ENCODE measurements at regions of chr9 and their contacts with region 1.

Region 1: DNA sequence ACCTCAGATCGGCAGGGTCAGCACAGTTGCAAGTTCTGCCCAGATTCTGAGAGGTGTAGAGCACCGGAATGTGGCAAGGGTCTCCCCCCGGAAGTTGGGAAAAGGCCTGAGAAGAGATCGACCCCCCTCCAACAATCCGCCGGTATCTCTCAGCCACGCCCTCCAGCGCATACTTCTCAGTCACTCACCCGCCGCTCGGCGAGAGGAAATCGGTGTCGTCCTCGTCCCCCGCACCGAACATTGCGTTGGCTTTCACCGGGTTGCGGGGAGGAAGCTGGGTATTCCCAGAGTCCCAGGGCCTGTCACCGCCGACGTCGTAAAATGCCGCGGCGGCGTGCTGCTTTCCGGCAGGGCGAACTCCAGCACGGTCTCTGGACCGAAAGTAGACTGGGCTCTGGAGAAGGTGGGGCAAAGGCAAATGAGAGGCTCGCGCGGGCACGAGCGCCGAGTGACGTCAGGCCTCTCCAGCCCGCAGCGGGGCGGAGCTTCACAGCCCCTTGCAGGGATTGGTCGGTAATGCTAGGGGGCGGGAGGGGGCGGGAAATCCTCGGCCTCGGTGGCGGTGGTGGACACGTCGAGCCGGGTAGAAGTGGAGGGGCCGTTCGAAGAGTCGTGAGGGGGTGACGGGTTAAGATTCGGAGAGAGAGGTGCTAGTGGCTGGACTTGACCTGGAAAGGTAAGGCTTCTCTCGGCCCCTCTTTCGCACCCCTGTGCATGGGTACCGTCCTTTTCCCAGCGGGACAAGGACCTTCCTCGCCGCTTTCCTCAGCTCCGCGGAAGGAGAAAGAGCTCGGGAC is at the starts of genes FKBP15 and SLC31A1:
- DNase-seq: peak; percentile 98
- H3K4me3 Mint-ChIP-seq: peak within 1 kb of the TSS; percentile 95
- H3K27ac Mint-ChIP-seq: peak within 1 kb of the TSS; percentile 91
- H3K4me1 Mint-ChIP-seq: peaks cover 38% of the 10 kb centered on the region
- H3K27me3 Mint-ChIP-seq: no peaks in the 10 kb centered on the region
- total RNA-seq, gene FKBP15: 14.7 to 15.8 TPM
- total RNA-seq, gene SLC31A1: 8.1 to 8.2 TPM

Region 2: GRCh38 chr9:111661150-111661801 is 1559.9 kb before region 1 on chr9 and contains the start of gene GNG10:
- CTCF ChIA-PET with region 1: no interaction called
- intact Hi-C with region 1: loop called (anchors 5 kb)
- DNase-seq: peak; percentile 63
- H3K4me3 Mint-ChIP-seq: peak within 1 kb of the TSS; percentile 97
- H3K27ac Mint-ChIP-seq: peak within 1 kb of the TSS; percentile 95
- H3K4me1 Mint-ChIP-seq: peaks cover 31% of the 10 kb centered on the region
- H3K27me3 Mint-ChIP-seq: peaks cover 2% of the 10 kb centered on the region
- total RNA-seq, gene GNG10: 20.6 to 21.1 TPM

Region 3: GRCh38 chr9:112750111-112750767 is 471.0 kb before region 1 on chr9 and contains the start of gene SNX30:
- CTCF ChIA-PET with region 1: no interaction called
- intact Hi-C with region 1: loop called (anchors 5 kb)
- DNase-seq: peak; percentile 84
- H3K4me3 Mint-ChIP-seq: peak within 1 kb of the TSS; percentile 81
- H3K27ac Mint-ChIP-seq: peak within 1 kb of the TSS; percentile 74
- H3K4me1 Mint-ChIP-seq: peaks cover 63% of the 10 kb centered on the region
- H3K27me3 Mint-ChIP-seq: no peaks in the 10 kb centered on the region
- total RNA-seq, gene SNX30: 4.1 to 4.6 TPM

Region 4: DNA sequence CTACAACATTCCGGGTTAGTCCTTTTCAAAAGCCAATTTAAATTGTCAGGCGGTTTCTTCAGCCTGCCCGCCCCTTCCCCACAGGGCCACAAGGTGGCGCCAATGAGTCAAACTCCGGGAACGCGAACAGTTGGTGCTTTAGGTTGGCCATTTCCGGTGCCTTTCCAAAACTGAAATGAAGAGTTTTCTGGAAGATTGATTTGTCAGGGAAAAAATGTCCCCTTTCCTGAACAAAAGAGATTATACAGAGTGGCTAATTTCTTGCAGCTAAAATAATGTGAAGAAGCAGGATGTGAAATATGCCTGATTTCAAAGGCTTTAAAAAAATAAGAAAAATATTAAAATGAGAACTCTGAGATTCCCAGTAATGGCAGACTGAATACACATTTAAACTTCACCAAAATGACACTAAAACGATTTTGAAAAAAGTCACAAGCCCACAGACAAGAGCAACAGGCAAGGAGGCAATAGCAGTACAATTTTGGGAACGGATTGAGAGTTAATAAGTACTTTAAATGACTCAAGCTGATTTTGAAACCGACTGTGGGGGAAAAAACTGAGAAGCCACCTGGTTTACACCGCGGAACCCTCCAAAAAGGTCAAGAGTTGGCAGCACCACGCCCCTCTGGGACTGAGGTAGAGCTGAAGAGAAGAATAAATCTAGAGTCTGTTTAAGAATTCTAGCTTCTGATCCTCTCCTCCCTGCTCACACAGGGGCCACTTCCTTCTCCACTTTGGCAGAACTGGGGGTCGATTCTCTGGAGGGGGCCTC is 376.2 kb before region 1 on chr9:
- CTCF ChIA-PET with region 1: no interaction called
- intact Hi-C with region 1: loop called (anchors 10 kb)
- DNase-seq: peak; percentile 86
- H3K4me3 Mint-ChIP-seq: no peak overlapping the region
- H3K27ac Mint-ChIP-seq: no peak overlapping the region
- H3K4me1 Mint-ChIP-seq: peaks cover 8% of the 10 kb centered on the region
- H3K27me3 Mint-ChIP-seq: no peaks in the 10 kb centered on the region

Region 5: GRCh38 chr9:113269355-113269754 is 48.2 kb after region 1 on chr9:
- CTCF ChIA-PET with region 1: interaction called, 21 read pairs
- intact Hi-C with region 1: loop called (anchors 1 kb)
- DNase-seq: no peak
- H3K4me3 Mint-ChIP-seq: no peak overlapping the region
- H3K27ac Mint-ChIP-seq: peak overlapping the region; percentile 57
- H3K4me1 Mint-ChIP-seq: peaks cover 23% of the 10 kb centered on the region
- H3K27me3 Mint-ChIP-seq: no peaks in the 10 kb centered on the region

Region 6: DNA sequence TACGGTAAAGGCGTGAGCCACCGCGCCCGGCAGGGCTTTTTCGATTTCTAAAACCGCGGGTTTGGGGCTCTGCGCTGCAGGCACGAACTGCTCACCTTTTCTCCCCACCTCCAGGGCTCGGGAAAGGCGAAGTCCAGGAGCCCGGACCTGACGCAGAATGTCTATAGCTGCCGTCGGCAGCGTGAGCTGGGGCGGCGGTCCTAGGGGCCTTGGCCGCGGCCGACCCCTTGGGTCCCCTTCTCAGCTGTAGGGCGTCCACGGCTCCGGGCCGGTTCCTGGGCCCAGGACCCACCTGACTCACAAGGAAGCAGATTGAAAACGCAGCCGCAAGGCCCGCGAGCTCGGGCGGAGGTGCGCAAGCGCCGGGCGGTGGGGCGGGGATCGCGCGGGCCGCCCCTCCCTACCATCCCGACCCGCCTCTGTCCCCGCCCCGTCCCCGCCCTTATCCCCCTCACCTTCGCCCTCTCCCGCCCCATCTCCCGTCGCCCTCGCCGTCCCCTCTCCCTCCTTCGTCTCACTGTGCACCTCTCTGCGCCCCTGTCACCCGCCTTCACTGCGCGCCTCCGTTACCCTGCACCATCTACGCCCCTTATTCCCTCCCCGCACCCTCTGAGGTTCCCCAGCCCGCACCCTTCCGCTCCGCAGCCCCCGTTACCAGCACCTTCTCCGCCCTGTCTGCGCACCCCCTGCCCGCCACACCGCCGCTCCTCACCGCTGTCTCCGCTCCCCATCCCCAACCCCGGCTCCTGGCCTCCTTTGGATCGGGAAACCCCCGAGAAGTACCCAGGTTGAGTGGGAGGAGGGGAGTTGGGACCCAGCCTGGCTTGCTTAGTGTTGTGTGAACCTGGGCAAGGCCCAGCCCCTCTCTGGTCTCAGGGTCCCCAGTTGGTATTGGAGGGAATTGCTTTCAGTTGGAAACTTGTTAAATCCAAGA is 155.7 kb after region 1 on chr9 and contains the start of gene HDHD3:
- CTCF ChIA-PET with region 1: no interaction called
- intact Hi-C with region 1: loop called (anchors 1 kb)
- DNase-seq: peak; percentile 82
- H3K4me3 Mint-ChIP-seq: peak within 1 kb of the TSS; percentile 81
- H3K27ac Mint-ChIP-seq: peak within 1 kb of the TSS; percentile 77
- H3K4me1 Mint-ChIP-seq: peaks cover 17% of the 10 kb centered on the region
- H3K27me3 Mint-ChIP-seq: no peaks in the 10 kb centered on the region
- total RNA-seq, gene HDHD3: 8.9 to 9.5 TPM

Region 7: GRCh38 chr9:113410207-113410864 is 189.1 kb after region 1 on chr9 and contains the starts of genes C9orf43 and POLE3:
- CTCF ChIA-PET with region 1: no interaction called
- intact Hi-C with region 1: loop called (anchors 1 kb)
- DNase-seq: peak; percentile 97
- H3K4me3 Mint-ChIP-seq: peak within 1 kb of the TSS; percentile 99
- H3K27ac Mint-ChIP-seq: peak within 1 kb of the TSS; percentile 100
- H3K4me1 Mint-ChIP-seq: peaks cover 38% of the 10 kb centered on the region
- H3K27me3 Mint-ChIP-seq: no peaks in the 10 kb centered on the region
- total RNA-seq, gene C9orf43: 0.83 to 0.84 TPM
- total RNA-seq, gene POLE3: 34.1 to 37.4 TPM